ENCODE measurements at regions of chr1 and their contacts with region 1.

Region 1: DNA sequence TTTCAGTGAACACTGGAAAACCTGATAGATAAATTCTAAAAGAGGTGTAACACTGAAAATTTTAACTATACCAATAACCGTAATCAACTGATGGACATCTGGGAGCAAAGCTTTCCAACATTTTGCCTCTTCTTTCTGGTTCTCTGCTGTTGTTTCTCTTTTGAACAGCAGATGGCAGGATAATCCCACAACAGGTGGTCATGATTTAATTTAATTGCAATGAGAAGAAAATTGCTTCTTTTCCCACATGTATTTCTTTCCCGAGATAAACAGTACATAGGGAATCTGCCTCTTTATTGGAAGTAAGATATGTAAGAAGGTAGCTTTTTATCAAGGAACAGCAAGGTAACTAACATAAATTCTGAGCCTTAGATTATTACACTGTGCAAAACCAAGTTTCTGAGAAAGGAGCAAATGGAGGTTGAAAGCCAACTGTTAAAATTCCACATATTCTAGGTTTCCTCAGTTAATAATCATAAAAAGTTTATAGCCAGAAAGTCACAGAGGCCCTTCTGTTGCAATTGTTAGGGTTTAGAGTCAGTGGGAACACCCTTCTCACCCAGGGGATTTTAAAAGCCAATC is 72.9 kb downstream of the RPS6KA1 start:
- ATAC-seq: peak in 6 of 8 experiments; percentile 18 to 37 (median 26)
- H3K4me3 ChIP-seq: no peak overlapping the region
- H3K27ac ChIP-seq: no peak overlapping the region
- H3K4me1 ChIP-seq: peaks cover 4 to 23% of the 10 kb centered on the region in 2 donors

Region 2: GRCh38 chr1:26500488-26501175 is 101.8 kb before region 1 on chr1:
- in situ Hi-C with region 1: no loop called
- ATAC-seq: peak; percentile 75 to 87 (median 83)
- H3K4me3 ChIP-seq: peak overlapping the region; percentile 45 to 68 (median 59)
- H3K27ac ChIP-seq: peak overlapping the region; percentile 54 to 70
- H3K4me1 ChIP-seq: peaks cover 0 to 2% of the 10 kb centered on the region in 2 donors

Region 3: GRCh38 chr1:26787706-26788514 is 185.4 kb after region 1 on chr1 and contains the start of gene PIGV:
- in situ Hi-C with region 1: loop called in 5 of 9 experiments (anchors 10 kb)
- ATAC-seq: peak; percentile 66 to 90 (median 85)
- H3K4me3 ChIP-seq: peak within 1 kb of the TSS; percentile 61 to 92 (median 72)
- H3K27ac ChIP-seq: peak within 1 kb of the TSS; percentile 99 to 100
- H3K4me1 ChIP-seq: peaks cover 35 to 42% of the 10 kb centered on the region in 2 donors
- total RNA-seq, gene PIGV: 8.2 to 26.7 (median 10.3) TPM

Region 4: GRCh38 chr1:26799479-26800142 is 197.1 kb after region 1 on chr1:
- in situ Hi-C with region 1: loop called in 4 of 9 experiments (anchors 10 kb)
- ATAC-seq: peak; percentile 79 to 93 (median 88)
- H3K4me3 ChIP-seq: no peak overlapping the region
- H3K27ac ChIP-seq: no peak overlapping the region
- H3K4me1 ChIP-seq: peaks cover 0 to 4% of the 10 kb centered on the region in 2 donors

Region 5: DNA sequence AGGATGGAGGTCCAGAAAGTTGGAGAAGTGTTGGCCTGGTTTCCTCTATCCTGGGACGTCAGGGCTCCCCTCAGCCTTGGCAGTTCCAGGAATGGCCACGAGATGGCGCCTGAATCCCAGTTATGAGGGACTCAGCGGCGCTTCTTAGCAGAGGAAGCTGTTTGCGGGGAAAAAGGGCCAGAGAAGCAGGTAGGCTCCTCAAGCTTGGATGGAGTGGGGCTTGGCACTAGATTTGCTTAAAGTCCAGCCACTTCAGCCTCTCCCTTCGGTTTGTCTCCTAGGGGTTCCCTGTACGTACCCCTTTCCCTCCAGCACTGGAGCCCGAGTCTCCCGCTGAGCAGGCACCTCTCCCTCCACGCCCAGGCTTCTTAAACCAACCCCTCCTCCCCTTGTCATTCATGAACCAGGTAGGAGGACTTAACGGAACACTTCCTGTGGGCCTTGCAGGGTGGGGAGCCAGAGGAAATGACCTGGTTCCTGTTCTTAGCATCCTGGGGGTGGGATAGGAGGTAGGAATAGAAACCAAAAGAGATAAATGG is 442.2 kb after region 1 on chr1:
- in situ Hi-C with region 1: no loop called
- ATAC-seq: peak; percentile 76 to 95 (median 88)
- H3K4me3 ChIP-seq: no peak overlapping the region
- H3K27ac ChIP-seq: no peak overlapping the region
- H3K4me1 ChIP-seq: peaks cover 4 to 17% of the 10 kb centered on the region in 2 donors

Region 6: DNA sequence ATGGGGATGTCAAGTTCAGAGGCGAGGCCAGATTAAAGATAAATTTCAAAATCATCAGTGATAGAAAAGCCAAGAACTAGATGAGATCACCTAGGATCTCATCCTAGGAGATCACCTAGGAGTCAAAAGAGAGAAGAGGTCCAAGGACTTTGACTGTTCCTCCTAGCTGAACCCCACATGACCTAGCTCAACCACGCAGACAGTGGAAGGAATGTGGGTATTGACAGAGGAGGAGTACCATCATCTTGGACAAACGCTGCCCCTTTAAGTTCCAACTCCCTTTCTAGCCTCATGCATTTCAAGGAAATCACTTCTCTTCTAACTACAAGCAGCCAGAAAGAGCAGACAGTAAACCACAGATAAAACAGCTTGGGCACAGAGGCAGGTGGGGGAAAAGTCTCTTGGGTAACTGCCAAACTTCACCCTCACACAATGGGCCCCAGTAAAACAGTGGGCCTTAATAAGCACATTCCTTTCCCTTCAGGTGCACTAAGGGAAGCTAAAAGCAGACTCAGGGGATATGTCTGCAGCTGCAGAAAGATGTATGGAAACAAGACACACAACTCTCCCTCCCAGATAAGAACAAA is 1110.8 kb after region 1 on chr1:
- in situ Hi-C with region 1: no loop called
- ATAC-seq: no peak
- H3K4me3 ChIP-seq: no peak overlapping the region
- H3K27ac ChIP-seq: no peak overlapping the region
- H3K4me1 ChIP-seq: no peaks in the 10 kb centered on the region